Right lobe of liver (tissue), 6 donors: ENCODE measurements at regions of chr1 and their contacts with region 1.

Region 1: GRCh38 chr1:202122639-202123335 is at the start of gene GPR37L1:
- DNase-seq: peak; percentile 70 to 76 (median 72)
- ATAC-seq: peak; percentile 57 to 72 (median 70)
- H3K4me3 ChIP-seq: no peak within 1 kb of the TSS
- H3K27ac ChIP-seq: no peak within 1 kb of the TSS
- H3K4me1 ChIP-seq: peaks cover 0 to 11% (median 5%) of the 10 kb centered on the region in 4 donors
- H3K27me3 ChIP-seq: no peaks in the 10 kb centered on the region
- CTCF ChIP-seq: peak; percentile 55 to 67 (median 56)
- POLR2A ChIP-seq: no peak
- total RNA-seq, gene GPR37L1: 0.12 to 0.49 (median 0.12) TPM in 4 of 6 experiments, not detected in the others

Region 2: GRCh38 chr1:201888282-201889089 is 234.3 kb before region 1 on chr1 and contains the start of gene SHISA4:
- intact Hi-C with region 1: loop called in 1 of 2 experiments (anchors 10 kb)
- DNase-seq: peak; percentile 74 to 88 (median 85)
- ATAC-seq: peak; percentile 88 to 95 (median 93)
- H3K4me3 ChIP-seq: peak within 1 kb of the TSS; percentile 67 to 77 (median 68)
- H3K27ac ChIP-seq: no peak within 1 kb of the TSS
- H3K4me1 ChIP-seq: peaks cover 0 to 15% (median 0%) of the 10 kb centered on the region in 4 donors
- H3K27me3 ChIP-seq: no peaks in the 10 kb centered on the region
- CTCF ChIP-seq: no peak
- POLR2A ChIP-seq: peak; percentile 63
- total RNA-seq, gene SHISA4: 2.5 to 8.1 (median 4.8) TPM

Region 3: GRCh38 chr1:201904579-201904978 is 218.2 kb before region 1 on chr1:
- intact Hi-C with region 1: loop called in 1 of 2 experiments (anchors 10 kb)
- DNase-seq: no peak
- ATAC-seq: peak in 2 of 4 donors; percentile 7 to 49
- H3K4me3 ChIP-seq: no peak overlapping the region
- H3K27ac ChIP-seq: peak overlapping the region in 2 of 3 donors; percentile 15 to 31
- H3K4me1 ChIP-seq: peaks cover 0 to 19% (median 0%) of the 10 kb centered on the region in 4 donors
- H3K27me3 ChIP-seq: no peaks in the 10 kb centered on the region
- CTCF ChIP-seq: no peak
- POLR2A ChIP-seq: no peak

Region 4: DNA sequence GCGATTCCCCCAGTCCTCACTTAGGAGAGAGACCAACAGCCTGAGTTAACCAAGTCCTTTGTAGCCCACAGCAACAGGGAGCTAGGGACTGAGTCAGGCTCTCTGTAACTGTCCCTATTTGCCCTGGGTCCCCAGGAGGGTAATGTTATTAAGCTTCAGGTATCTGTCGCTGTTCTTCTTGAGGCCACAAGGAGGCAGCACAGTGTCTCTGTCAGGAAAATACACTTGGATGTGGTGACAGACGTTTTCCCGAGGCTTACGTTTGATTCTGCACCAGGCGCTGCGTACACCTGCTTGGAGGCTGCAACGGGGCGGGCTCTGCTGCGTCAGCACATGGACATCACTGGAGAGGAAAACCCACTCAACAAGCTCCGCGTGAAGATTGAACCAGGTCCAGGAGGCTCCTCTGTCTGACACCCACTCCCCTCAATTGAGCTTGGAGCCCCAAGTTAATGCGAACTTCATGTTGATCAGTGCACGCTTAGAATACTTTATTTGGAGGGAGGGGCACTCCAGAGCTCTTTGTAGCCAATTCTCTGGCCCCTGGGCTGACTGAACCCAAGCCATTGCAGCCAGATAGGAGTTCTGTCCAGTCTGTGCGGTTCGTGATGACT is 123.1 kb before region 1 on chr1:
- intact Hi-C with region 1: loop called in 1 of 2 experiments (anchors 5 kb)
- DNase-seq: no peak
- ATAC-seq: peak; percentile 81 to 91 (median 88)
- H3K4me3 ChIP-seq: no peak overlapping the region
- H3K27ac ChIP-seq: no peak overlapping the region
- H3K4me1 ChIP-seq: no peaks in the 10 kb centered on the region
- H3K27me3 ChIP-seq: no peaks in the 10 kb centered on the region
- CTCF ChIP-seq: peak; percentile 64 to 72 (median 68)
- POLR2A ChIP-seq: no peak

Region 5: GRCh38 chr1:202005760-202006357 is 116.9 kb before region 1 on chr1:
- intact Hi-C with region 1: loop called (anchors 2 to 5 kb)
- DNase-seq: no peak
- ATAC-seq: no peak
- H3K4me3 ChIP-seq: no peak overlapping the region
- H3K27ac ChIP-seq: no peak overlapping the region
- H3K4me1 ChIP-seq: peaks cover 0 to 14% (median 5%) of the 10 kb centered on the region in 4 donors
- H3K27me3 ChIP-seq: no peaks in the 10 kb centered on the region
- CTCF ChIP-seq: peak; percentile 35 to 59 (median 54)
- POLR2A ChIP-seq: no peak

Region 6: GRCh38 chr1:202167708-202168415 is 45.1 kb after region 1 on chr1:
- intact Hi-C with region 1: no loop called
- DNase-seq: peak in 1 of 3 donors; percentile 37
- ATAC-seq: no peak
- H3K4me3 ChIP-seq: no peak overlapping the region
- H3K27ac ChIP-seq: no peak overlapping the region
- H3K4me1 ChIP-seq: peaks cover 0 to 7% (median 0%) of the 10 kb centered on the region in 4 donors
- H3K27me3 ChIP-seq: no peaks in the 10 kb centered on the region
- CTCF ChIP-seq: no peak
- POLR2A ChIP-seq: no peak